ENCODE measurements at regions of chr5 and their contacts with region 1.

Region 1: DNA sequence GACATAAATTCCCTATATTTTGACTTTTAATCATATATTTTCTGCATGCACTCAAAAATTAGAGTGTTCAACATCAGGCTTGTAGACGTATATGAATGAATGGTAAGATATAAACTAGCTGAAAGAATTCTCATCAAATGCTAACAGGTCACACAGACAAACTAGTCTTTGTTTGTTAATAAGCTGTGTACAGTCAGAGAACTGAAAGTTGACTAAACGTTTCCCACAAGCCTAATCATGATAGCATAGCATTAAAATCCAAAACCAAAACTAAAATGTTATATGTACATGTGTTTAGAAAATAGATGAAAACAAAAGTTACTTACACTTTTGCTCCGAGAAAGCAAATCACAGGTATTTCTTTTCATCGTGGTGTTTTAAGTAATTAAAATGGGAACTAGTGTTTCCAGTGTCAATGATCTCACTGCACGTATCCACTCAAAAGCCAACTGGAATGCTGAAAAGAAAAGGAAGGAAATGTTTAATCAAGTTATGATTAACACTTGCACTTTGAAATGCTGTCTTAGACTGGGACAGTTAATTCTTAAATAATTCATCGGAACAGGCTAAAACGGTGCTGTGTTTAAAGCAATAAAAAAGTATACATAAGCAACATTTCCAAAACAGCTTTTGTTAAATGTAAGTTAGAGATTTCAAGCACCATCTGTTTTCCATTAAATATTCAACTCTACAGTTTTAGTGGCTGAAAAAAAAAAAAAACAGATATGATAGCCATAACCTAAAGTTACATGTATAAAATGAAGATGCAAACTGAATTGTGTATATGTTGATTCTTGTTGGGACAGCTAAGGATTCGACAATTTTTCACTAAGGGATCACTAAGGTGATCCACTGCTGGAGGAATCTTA is 291.9 kb upstream of the PDE4D start:
- DNase-seq: no peak
- H3K4me3 ChIP-seq: no peak overlapping the region
- H3K27ac ChIP-seq: no peak overlapping the region
- H3K4me1 ChIP-seq: no peaks in the 10 kb centered on the region
- H3K27me3 ChIP-seq: no peaks in the 10 kb centered on the region
- CTCF ChIP-seq: no peak
- POLR2A ChIP-seq: no peak

Region 2: GRCh38 chr5:60219921-60220320 is 34.5 kb after region 1 on chr5:
- intact Hi-C with region 1: no loop called
- DNase-seq: no peak
- H3K4me3 ChIP-seq: no peak overlapping the region
- H3K27ac ChIP-seq: no peak overlapping the region
- H3K4me1 ChIP-seq: no peaks in the 10 kb centered on the region
- H3K27me3 ChIP-seq: no peaks in the 10 kb centered on the region
- CTCF ChIP-seq: no peak
- POLR2A ChIP-seq: no peak

Region 3: DNA sequence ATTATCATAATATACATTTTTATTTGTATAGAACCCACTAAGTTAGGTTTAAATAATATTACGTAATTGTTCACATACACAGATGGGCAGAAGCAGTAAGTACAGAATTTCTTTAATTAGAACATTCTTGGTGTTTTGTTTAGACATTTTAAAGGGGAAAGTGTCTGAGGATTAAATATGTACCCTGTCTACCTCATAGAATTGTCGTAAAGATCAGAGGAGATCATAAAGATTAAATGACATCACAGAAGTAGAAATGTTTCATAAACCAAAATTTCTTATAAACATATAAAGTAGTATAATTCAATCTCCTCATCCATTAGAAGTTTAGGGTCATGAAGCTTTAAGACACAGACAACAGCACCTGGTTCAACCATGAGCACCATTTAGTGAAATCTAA is 494.4 kb after region 1 on chr5:
- intact Hi-C with region 1: loop called (anchors 5 kb)
- DNase-seq: no peak
- H3K4me3 ChIP-seq: no peak overlapping the region
- H3K27ac ChIP-seq: no peak overlapping the region
- H3K4me1 ChIP-seq: no peaks in the 10 kb centered on the region
- H3K27me3 ChIP-seq: no peaks in the 10 kb centered on the region
- CTCF ChIP-seq: no peak
- POLR2A ChIP-seq: no peak